ENCODE measurements at regions of chr9 and their contacts with region 1.

Region 1: DNA sequence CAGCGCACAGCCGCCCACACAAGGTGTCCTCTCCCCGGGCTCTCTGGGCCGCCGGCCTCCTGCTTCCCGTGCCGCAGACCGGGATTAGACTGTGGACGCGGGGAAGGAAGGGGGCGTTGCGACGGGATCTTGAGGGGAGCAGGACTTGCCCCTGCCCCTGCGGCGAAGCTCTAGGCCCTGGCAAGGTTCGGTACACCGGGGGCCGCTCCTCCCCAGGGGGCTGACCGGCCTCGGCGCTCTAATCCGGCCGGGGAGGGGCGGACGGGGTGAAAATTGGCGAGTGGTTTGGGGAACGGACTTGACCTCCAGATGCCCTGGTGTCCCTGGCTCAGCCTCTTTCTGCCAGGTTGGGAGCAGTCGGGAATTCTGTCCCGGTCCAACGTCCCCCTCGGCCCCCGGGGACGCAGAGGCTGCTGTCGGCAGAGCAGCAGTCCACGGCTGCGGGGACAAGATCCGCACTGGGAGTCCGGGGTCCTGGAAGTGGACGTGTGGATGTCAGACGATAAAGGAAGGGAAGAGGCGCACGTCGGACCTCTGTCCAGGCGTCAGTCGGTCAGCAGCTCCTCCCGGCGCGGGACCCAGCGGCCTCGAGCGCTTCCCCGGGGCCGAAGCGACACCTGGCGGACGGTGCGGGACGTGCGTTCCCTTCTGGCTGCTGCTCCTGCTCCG is 1.9 kb upstream of the CNTFR start:
- DNase-seq: peak; percentile 84
- H3K4me3 ChIP-seq: no peak overlapping the region
- H3K27ac ChIP-seq: no peak overlapping the region
- H3K4me1 ChIP-seq: peaks cover 17% of the 10 kb centered on the region
- H3K27me3 ChIP-seq: no peaks in the 10 kb centered on the region
- CTCF ChIP-seq: peak; percentile 89 to 96 (median 94)
- POLR2A ChIP-seq: no peak

Region 2: GRCh38 chr9:34403554-34404380 is 187.6 kb before region 1 on chr9:
- intact Hi-C with region 1: loop called (anchors 2 kb)
- DNase-seq: peak; percentile 61
- H3K4me3 ChIP-seq: no peak overlapping the region
- H3K27ac ChIP-seq: no peak overlapping the region
- H3K4me1 ChIP-seq: no peaks in the 10 kb centered on the region
- H3K27me3 ChIP-seq: no peaks in the 10 kb centered on the region
- CTCF ChIP-seq: peak; percentile 88 to 94 (median 90)
- POLR2A ChIP-seq: no peak

Region 3: GRCh38 chr9:34546834-34547827 is 44.3 kb before region 1 on chr9:
- intact Hi-C with region 1: loop called (anchors 1 kb)
- DNase-seq: peak; percentile 63
- H3K4me3 ChIP-seq: no peak overlapping the region
- H3K27ac ChIP-seq: no peak overlapping the region
- H3K4me1 ChIP-seq: peaks cover 6% of the 10 kb centered on the region
- H3K27me3 ChIP-seq: no peaks in the 10 kb centered on the region
- CTCF ChIP-seq: peak; percentile 64 to 89 (median 78)
- POLR2A ChIP-seq: no peak